SK-N-SH (cell line): ENCODE measurements at regions of chr1 and their contacts with region 1.

Region 1: DNA sequence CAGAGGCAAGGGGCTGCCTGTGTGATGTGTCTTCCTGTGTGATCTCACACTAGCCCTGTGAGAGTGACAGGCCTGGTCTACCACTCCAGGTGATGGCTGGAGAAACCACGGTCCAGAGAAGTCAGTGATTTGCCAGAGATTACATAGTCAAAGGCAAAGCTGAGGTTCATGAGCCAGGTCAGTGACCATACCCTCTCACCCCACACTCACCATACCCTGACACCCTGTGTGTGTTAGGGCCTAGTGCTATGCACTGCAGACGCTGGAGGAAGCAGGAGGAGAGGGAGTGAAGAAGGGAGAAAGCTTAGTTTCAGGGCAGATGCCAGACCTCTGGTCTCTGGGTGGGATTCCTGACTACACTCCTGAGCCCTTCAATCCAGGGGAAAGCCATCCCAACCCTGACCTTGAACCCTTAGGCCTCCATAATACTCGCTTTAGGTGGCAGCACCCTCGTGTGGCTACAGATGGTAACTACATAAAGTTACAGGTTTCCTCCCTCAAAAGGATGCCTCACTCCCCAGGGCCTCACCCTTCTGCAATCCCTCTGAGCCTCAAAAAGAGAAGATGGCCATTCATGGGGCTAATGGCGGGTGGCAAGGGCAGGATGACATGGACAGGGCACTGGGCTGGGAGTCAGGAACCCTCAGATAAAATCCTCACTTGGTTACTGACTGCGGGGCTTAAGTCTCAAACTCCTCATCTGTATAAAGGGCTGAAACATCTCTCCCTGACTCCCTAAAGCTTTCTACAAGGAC is 20.8 kb upstream of the SDC3 start:
- DNase-seq: peak; percentile 70
- H3K4me3 ChIP-seq: peak overlapping the region in 1 of 2 experiments; percentile 32; a peak in 1 of 4 replicates
- H3K27ac ChIP-seq: peak overlapping the region in 1 of 2 experiments; percentile 31; a peak in 1 of 4 replicates
- H3K4me1 ChIP-seq: peaks cover 0 to 13% of the 10 kb centered on the region in 2 experiments; a peak in 1 of 4 replicates
- H3K27me3 ChIP-seq: no peaks in the 10 kb centered on the region
- CTCF ChIP-seq: peak; percentile 78
- EP300 ChIP-seq: no peak
- RAD21 ChIP-seq: peak; percentile 77

Region 2: GRCh38 chr1:30919025-30919881 is 10.1 kb before region 1 on chr1:
- CTCF ChIA-PET with region 1: interaction called, 112 read pairs
- POLR2A ChIA-PET with region 1: no interaction called
- DNase-seq: no peak
- H3K4me3 ChIP-seq: no peak overlapping the region
- H3K27ac ChIP-seq: no peak overlapping the region; a peak in 2 of 4 replicates
- H3K4me1 ChIP-seq: peaks cover 6 to 12% of the 10 kb centered on the region in 2 experiments; a peak in 3 of 4 replicates
- H3K27me3 ChIP-seq: no peaks in the 10 kb centered on the region
- CTCF ChIP-seq: no peak
- EP300 ChIP-seq: 0 out of 4 replicates have a peak, but pooled peaks of 1 of the 2 experiments have one; percentile 17
- RAD21 ChIP-seq: no peak

Region 3: DNA sequence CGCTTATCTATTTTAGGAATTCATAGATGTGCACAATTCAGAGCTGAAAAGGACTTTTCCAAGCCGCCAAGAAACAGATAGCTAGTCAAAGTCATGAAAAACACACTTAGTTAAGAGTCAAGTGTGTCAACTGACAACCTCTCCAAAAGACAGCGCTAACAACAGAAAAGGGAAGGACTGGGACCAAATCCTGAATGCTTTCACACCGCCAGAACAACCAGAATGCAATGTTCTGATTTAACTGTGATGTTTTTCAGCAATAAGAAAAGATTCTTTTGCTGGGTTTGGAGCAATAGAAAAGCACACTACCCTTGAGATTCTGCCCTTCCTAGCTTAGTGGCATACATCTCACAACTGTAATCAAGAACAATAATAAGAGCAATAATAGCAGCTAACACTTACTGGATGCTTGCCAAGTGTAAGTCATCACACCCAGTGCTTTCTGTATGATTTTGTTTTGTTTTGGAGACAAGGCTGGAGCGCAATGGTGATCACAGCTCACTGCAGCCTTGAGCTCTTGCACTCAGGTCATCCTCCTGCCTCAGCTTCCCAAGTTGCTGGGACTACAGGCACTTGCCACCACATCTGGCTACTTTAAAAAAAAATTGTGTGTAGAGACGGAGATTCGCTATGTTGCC is 13.1 kb after region 1 on chr1:
- CTCF ChIA-PET with region 1: interaction called, 34 read pairs
- POLR2A ChIA-PET with region 1: no interaction called
- DNase-seq: no peak
- H3K4me3 ChIP-seq: no peak overlapping the region
- H3K27ac ChIP-seq: no peak overlapping the region
- H3K4me1 ChIP-seq: no peaks in the 10 kb centered on the region
- H3K27me3 ChIP-seq: no peaks in the 10 kb centered on the region
- CTCF ChIP-seq: no peak
- EP300 ChIP-seq: no peak
- RAD21 ChIP-seq: no peak